Lower leg skin (tissue), 4 donors: ENCODE measurements at regions of chr9 and their contacts with region 1.

Region 1: DNA sequence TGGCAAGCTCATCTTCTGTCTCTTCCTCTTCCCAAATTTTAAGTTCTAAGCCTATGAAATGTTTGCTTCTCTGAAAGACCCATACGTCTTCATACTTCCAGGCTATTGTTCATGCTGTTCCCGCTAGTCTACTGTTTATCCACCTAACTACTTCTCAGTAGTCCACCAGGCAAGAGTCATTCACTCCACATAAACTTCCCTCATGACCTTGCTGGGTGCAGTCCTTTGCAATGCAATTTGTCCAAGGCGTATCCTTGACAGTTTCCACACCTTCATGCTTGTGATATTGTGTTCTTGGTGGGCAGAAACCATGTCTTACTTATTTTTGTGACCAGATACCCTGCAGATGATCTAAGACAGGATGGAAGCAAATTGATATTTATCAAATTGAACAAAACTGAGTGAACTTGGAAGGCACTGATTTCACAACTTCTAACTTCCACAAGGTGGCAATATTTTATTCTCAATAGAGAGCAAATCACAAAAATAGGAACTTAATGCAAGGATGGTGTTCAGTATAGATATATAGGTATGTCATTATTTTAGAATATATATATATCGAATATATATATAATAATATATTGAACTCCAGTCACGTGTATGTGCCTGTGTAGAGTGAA is 30.3 kb downstream of the TYRP1 start:
- DNase-seq: no peak
- H3K4me3 ChIP-seq: no peak overlapping the region
- CTCF ChIP-seq: peak in 1 of 3 donors; percentile 23
- POLR2A ChIP-seq: no peak

Region 2: DNA sequence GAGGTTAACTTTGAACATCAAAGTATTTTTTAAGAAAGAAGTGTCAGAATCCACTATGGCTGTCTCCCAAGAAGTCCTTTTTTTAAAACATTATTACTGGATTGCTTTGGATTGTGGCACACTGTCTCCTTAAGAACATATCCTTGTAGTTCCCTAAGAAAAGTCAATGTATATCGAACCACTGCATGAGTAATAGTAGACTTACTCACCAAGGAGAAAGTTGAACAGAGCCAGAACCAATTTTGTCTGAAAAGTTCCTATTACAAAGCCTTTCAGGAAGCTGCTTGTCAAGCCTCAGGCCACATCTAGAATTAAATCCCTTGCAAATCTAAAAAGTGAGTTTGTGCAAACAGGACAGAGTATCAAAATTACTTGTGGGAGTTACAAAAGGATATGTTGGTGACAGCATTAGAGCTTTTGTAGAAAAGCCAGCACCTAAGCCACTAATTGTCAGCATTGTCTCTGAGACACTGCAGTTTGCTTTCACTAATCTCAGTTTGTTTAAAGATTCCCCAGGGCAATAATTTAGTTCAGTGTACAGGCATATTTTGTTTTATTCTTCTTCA is 360.5 kb after region 1 on chr9:
- intact Hi-C with region 1: loop called (anchors 5 kb)
- DNase-seq: no peak
- H3K4me3 ChIP-seq: no peak overlapping the region
- CTCF ChIP-seq: no peak
- POLR2A ChIP-seq: no peak